ENCODE measurements at regions of chr1 and their contacts with region 1.

Region 1: GRCh38 chr1:1406817-1407635 is at the start of gene MRPL20:
- H3K4me3 ChIP-seq: peak within 1 kb of the TSS; percentile 84
- H3K27ac ChIP-seq: peak within 1 kb of the TSS; percentile 87
- H3K4me1 ChIP-seq: no peaks in the 10 kb centered on the region
- CTCF ChIP-seq: no peak

Region 2: GRCh38 chr1:1441002-1441888 is 34.2 kb after region 1 on chr1:
- CTCF ChIA-PET with region 1: interaction called, 14 read pairs
- POLR2A ChIA-PET with region 1: interaction called, 5 read pairs
- H3K4me3 ChIP-seq: no peak overlapping the region
- H3K27ac ChIP-seq: no peak overlapping the region
- H3K4me1 ChIP-seq: no peaks in the 10 kb centered on the region
- CTCF ChIP-seq: peak; percentile 93

Measured in HEK293 (cell line).